ENCODE measurements at regions of chr11 and their contacts with region 1.

Region 1: GRCh38 chr11:17298302-17298701 is 21.8 kb downstream of the NUCB2 start:
- DNase-seq: no peak
- ATAC-seq: no peak
- H3K4me3 Mint-ChIP-seq: no peak overlapping the region
- H3K27ac Mint-ChIP-seq: no peak overlapping the region
- H3K4me1 Mint-ChIP-seq: no peaks in the 10 kb centered on the region
- H3K27me3 Mint-ChIP-seq: no peaks in the 10 kb centered on the region
- CTCF ChIP-seq: no peak

Region 2: DNA sequence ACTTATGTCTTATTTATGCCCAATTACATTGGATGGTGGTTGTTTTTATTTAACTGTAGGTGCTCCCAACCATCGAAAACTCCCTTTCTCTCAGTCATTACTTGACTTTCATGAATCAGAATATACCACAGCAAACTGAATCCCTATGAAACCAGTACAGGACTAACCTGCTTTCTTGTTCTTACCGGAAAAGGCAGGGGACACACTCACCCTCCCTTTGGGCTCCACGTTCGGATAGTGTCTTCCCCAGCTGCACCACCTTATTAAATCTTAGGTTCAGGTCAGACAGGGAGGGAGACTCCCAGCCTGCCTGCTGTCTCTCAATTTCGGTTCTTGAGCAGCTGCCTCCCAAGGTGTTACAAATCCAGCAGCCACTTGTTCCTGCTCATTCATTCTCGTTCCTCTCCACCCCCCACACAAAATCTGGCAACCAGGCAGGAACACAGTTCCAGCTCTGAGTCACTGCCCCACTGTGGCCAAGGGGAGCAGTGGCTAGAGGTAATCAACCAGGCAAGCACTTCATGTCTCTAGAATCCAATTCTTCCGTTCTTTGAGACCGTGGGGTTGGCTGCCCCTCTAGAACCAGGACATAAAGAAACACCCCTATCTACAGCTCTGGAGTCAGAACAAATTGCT is 417.1 kb before region 1 on chr11:
- CTCF ChIA-PET with region 1: no interaction called
- POLR2A ChIA-PET with region 1: interaction called, 13 read pairs
- DNase-seq: peak; percentile 22
- ATAC-seq: peak; percentile 82
- H3K4me3 Mint-ChIP-seq: no peak overlapping the region
- H3K27ac Mint-ChIP-seq: 0 out of 2 replicates have a peak overlapping the region, but pooled peaks have one; percentile 10
- H3K4me1 Mint-ChIP-seq: peaks cover 39% of the 10 kb centered on the region
- H3K27me3 Mint-ChIP-seq: no peaks in the 10 kb centered on the region
- CTCF ChIP-seq: no peak